ENCODE measurements at regions of chr22 and their contacts with region 1.

Region 1: DNA sequence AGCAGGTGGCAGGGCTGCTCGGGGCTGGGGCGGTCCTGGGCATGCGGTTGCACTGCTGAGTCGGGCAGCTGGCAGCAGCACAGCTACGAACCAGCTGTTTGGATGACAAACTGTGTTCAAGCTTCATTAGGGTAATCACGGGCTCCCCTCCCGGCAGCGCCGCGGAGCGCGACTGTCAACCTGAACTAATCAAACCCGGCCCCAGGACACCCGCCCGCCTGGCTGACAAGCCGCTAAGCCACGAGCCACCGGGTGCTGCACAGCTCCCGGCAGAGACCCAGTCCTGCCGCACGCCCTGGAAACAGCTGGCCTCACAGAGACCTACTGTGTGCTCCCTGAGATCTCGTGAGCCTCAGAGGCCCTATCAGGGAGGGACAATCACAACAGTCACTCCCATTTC is 60.6 kb upstream of the TCF20 start:
- DNase-seq: peak; percentile 58
- H3K4me3 ChIP-seq: no peak overlapping the region
- H3K27ac ChIP-seq: no peak overlapping the region
- H3K4me1 ChIP-seq: no peaks in the 10 kb centered on the region
- H3K27me3 ChIP-seq: no peaks in the 10 kb centered on the region
- CTCF ChIP-seq: no peak

Region 2: DNA sequence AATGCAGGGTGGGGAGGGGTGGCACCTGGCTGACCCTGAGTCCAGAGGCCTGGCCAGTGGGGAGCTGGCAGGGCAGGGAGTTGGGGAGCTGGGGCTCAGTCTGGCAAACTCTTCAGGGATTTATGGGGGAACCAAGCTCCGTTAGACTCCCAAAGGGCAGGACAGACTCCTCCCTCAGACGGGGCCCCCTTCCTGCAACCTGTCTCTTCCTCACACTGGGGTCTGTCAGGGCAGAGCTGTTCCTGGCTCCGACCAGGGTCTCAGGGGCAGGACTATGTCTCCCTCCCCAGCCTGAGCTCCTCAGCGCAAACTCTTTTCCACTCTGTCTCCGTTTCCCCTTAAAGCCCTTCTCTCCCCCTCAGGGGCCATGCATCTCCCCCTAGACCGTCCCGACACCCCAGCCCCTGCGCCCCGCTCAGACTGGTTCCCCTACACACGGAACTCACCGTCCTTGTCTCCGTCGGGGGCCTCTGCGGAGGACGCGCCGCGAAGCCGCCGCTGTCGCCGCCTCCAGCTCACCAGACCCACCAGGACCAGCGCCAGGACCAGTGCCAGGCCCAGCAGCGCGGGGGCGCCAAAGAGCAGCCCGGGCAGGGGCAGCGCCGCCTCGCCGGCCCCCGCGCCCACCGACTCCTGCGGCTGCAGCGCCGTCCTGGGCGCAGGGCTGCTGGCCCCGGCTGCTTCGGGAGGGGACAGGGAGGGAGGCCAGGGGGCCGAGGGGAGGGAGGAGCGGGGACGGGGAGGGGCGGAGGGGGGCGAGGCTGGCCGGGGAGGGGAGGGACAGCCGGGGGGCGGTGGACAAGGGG is 405.2 kb before region 1 on chr22:
- intact Hi-C with region 1: no loop called
- DNase-seq: peak; percentile 82
- H3K4me3 ChIP-seq: peak overlapping the region; percentile 51
- H3K27ac ChIP-seq: no peak overlapping the region
- H3K4me1 ChIP-seq: no peaks in the 10 kb centered on the region
- H3K27me3 ChIP-seq: peaks cover 18% of the 10 kb centered on the region
- CTCF ChIP-seq: peak; percentile 60

Region 3: DNA sequence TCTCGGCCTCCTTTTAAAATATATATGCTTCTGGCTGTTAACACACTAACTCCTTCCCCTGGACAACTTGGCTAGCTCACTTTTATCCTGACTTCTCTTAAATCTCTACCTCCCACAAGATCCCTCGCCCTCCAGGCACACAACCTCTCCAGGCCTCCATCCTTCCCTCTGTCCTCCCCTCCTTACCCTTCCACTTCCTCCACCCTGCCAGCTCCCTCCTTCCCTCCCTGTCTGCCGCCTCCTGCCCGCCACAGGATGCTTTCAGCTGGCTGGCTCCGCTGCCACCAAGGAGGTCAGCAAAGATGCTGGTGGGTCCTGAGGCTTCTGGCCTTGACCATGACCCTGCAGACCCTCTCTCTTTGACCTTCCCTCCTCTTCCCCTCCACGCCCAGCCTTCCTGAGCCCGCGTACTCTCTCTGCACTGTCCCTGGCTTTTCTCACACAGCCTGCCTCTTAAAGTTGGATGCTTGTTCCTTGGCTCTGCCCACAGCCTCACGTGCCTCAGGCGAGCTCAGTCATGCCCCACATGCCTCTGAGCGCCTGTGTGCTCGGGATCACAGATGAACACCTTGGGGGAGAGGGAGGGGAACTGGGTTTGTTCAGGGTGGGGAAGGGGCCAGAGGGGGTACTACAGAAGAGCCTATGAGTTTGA is 94.4 kb after region 1 on chr22:
- intact Hi-C with region 1: loop called (anchors 10 kb)
- DNase-seq: no peak
- H3K4me3 ChIP-seq: no peak overlapping the region
- H3K27ac ChIP-seq: no peak overlapping the region
- H3K4me1 ChIP-seq: no peaks in the 10 kb centered on the region
- H3K27me3 ChIP-seq: no peaks in the 10 kb centered on the region
- CTCF ChIP-seq: no peak